Activated CD4-positive, alpha-beta T cell treated with anti-CD3 and anti-CD28 coated beads, Interleukin-2, amount 10 ng/mL, durations not matched to agents 7 days and 5 days (primary cell): ENCODE measurements at regions of chr12 and their contacts with region 1.

Region 1: GRCh38 chr12:47397664-47398281 is 308.1 kb downstream of the RPAP3 start:
- DNase-seq: peak; percentile 63
- H3K4me3 Mint-ChIP-seq: no peak overlapping the region
- H3K27ac Mint-ChIP-seq: peak overlapping the region; percentile 91
- H3K4me1 Mint-ChIP-seq: peaks cover 66% of the 10 kb centered on the region
- H3K27me3 Mint-ChIP-seq: no peaks in the 10 kb centered on the region

Region 2: DNA sequence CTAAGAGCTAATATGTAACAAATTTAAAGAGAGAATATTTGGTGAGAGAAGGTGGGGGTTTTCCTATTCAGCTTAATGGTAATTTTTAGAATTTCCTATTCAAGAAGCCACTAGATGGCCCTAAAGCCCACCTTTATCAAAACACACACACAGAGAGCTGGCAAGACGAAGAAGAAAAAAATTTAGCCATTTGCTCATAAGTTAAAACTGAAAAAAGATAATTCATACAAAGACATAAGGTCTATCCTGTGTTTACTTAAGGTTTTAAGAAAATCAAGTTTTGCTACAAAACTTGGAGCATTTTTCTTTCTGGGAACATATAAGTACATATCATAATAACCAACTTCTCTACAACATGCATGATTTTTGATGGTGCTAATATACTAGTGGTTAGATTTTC is 365.1 kb before region 1 on chr12:
- CTCF ChIA-PET with region 1: interaction called, 22 read pairs
- POLR2A ChIA-PET with region 1: no interaction called
- DNase-seq: peak; percentile 42
- H3K4me3 Mint-ChIP-seq: no peak overlapping the region
- H3K27ac Mint-ChIP-seq: no peak overlapping the region
- H3K4me1 Mint-ChIP-seq: peaks cover 10% of the 10 kb centered on the region
- H3K27me3 Mint-ChIP-seq: no peaks in the 10 kb centered on the region

Region 3: DNA sequence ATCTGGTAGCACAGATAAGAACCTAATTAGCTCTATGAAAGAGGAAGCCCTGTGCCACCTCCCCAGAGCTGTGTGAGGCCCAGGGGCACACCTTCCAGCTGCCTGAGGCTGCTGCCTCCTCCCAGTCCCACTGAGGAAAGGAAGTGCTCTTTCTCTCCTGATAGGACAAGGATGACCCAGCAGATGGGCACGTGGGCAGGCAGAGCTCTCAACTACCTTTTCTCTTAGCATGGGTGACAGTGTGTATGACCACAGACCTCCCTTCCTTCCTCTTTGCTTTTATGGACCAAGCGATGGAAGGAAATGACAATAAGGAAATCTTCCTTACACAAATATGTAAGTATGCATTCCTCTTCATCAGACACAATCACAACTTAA is 190.4 kb before region 1 on chr12:
- CTCF ChIA-PET with region 1: interaction called, 10 read pairs
- POLR2A ChIA-PET with region 1: interaction called, 3 read pairs
- DNase-seq: peak; percentile 64
- H3K4me3 Mint-ChIP-seq: peak overlapping the region; percentile 70
- H3K27ac Mint-ChIP-seq: peak overlapping the region; percentile 89
- H3K4me1 Mint-ChIP-seq: peaks cover 74% of the 10 kb centered on the region
- H3K27me3 Mint-ChIP-seq: no peaks in the 10 kb centered on the region

Region 4: GRCh38 chr12:47216150-47216677 is 181.6 kb before region 1 on chr12:
- CTCF ChIA-PET with region 1: interaction called, 21 read pairs
- POLR2A ChIA-PET with region 1: interaction called, 9 read pairs
- DNase-seq: peak; percentile 86
- H3K4me3 Mint-ChIP-seq: peak overlapping the region; percentile 86
- H3K27ac Mint-ChIP-seq: peak overlapping the region; percentile 95
- H3K4me1 Mint-ChIP-seq: peaks cover 43% of the 10 kb centered on the region
- H3K27me3 Mint-ChIP-seq: no peaks in the 10 kb centered on the region

Region 5: DNA sequence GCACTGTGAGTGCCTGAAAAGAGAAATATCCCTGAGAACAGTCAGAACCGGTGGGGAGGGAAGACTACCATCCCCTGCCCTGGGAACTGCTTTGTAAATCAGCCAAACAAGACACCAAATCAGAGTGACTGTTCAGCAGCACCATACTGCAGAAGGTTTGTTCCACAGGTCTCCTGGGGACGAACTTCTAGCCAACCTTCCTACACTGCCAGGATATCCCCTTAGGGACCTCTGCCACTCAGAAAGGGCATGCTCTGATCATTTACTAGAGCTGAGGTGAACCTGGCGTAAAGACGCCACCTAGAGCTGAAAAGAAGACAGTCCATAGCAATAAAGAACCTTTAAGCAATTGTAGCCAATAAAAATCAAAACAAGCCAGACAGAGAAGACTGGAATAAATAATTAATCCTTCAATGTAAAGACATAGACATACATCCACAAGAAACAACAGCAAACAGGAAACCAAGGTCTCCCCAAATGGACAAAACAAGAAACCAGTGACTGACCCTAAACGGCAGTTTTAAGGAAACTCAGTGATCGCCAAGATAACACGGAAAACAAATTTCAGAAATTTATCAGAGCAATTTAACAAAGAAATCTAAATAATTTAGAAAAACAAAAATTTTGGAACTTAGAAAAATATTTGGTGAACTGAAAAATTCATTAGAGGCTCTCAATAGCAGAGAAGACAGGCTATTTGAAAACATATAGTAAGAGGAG is 89.9 kb before region 1 on chr12:
- CTCF ChIA-PET with region 1: interaction called, 18 read pairs
- POLR2A ChIA-PET with region 1: interaction called, 7 read pairs
- DNase-seq: peak; percentile 72
- H3K4me3 Mint-ChIP-seq: peak overlapping the region; percentile 74
- H3K27ac Mint-ChIP-seq: peak overlapping the region; percentile 88
- H3K4me1 Mint-ChIP-seq: peaks cover 44% of the 10 kb centered on the region
- H3K27me3 Mint-ChIP-seq: no peaks in the 10 kb centered on the region

Region 6: DNA sequence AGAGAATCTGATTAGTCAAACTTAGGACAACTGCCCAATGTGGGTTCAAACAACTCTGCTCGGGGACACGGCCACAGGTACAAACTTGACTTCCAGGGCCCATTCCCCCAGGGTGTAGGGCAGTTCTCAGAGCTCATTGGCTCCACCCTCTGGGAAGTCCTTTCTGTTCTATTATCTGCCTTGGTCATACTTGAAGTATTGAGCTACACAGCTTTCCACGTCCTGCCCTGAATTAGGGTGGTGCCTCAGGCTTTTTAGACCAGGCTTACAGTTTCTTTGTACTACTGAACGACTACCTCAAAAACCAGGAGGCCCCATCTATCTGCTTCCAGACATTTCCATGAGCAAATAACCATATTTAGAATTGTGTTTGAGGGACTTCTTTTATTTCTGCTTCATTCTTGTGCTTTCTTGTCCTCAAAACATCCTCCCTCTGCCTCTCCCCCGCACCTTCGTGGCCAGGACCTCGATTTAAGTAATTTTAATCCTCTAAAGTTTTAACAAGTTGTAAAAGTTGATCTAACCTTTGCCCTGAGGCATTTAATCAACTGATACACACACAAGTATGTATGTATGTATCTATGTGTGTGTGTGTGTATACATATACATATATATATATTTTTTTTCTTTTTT is 36.3 kb before region 1 on chr12:
- CTCF ChIA-PET with region 1: interaction called, 12 read pairs
- POLR2A ChIA-PET with region 1: no interaction called
- DNase-seq: peak; percentile 48
- H3K4me3 Mint-ChIP-seq: peak overlapping the region; percentile 69
- H3K27ac Mint-ChIP-seq: peak overlapping the region; percentile 98
- H3K4me1 Mint-ChIP-seq: peaks cover 60% of the 10 kb centered on the region
- H3K27me3 Mint-ChIP-seq: no peaks in the 10 kb centered on the region

Region 7: GRCh38 chr12:47408171-47408871 is 10.5 kb after region 1 on chr12:
- CTCF ChIA-PET with region 1: interaction called, 14 read pairs
- POLR2A ChIA-PET with region 1: no interaction called
- DNase-seq: peak; percentile 58
- H3K4me3 Mint-ChIP-seq: no peak overlapping the region
- H3K27ac Mint-ChIP-seq: peak overlapping the region; percentile 81
- H3K4me1 Mint-ChIP-seq: peaks cover 57% of the 10 kb centered on the region
- H3K27me3 Mint-ChIP-seq: no peaks in the 10 kb centered on the region

Region 8: GRCh38 chr12:47458270-47458669 is 60.5 kb after region 1 on chr12:
- CTCF ChIA-PET with region 1: no interaction called
- POLR2A ChIA-PET with region 1: no interaction called
- DNase-seq: no peak
- H3K4me3 Mint-ChIP-seq: no peak overlapping the region
- H3K27ac Mint-ChIP-seq: no peak overlapping the region
- H3K4me1 Mint-ChIP-seq: no peaks in the 10 kb centered on the region
- H3K27me3 Mint-ChIP-seq: peaks cover 5% of the 10 kb centered on the region

Region 9: GRCh38 chr12:47591361-47591791 is 193.6 kb after region 1 on chr12:
- CTCF ChIA-PET with region 1: no interaction called
- POLR2A ChIA-PET with region 1: no interaction called
- DNase-seq: no peak
- H3K4me3 Mint-ChIP-seq: no peak overlapping the region
- H3K27ac Mint-ChIP-seq: no peak overlapping the region
- H3K4me1 Mint-ChIP-seq: no peaks in the 10 kb centered on the region
- H3K27me3 Mint-ChIP-seq: no peaks in the 10 kb centered on the region